ENCODE measurements at regions of chr11 and their contacts with region 1.

Region 1: DNA sequence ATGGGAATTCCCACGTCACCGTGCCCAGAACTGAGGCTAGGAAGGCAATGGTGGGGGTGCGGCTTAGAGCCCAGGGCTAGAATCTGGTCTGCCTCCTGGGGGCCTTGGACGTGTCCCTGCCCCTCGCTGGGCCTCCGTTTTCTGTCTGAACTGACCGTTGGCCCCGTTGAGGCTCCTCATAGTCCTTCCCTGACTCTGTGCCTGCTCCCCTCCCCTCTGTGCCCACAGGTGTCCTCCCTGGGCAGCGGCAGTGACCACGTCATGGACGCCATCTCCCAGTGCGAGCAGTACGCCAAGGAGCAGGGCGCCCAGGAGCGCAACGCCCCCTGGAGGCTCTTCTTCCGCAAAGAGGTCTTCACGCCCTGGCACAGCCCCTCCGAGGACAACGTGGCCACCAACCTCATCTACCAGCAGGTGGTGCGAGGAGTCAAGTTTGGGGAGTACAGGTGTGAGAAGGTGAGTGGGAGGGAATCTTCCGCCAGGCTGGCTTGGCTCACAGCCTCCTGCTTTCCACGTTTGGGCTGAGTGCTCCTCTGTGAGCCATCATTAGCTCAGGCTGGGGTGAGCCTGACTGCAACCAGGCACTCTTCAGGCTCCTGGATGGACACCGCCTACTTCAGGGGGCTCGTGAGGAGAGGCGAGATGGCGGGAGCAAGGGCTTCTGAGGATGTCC is 63.9 kb downstream of the MYO7A start:
- DNase-seq: peak; percentile 81 to 86
- H3K4me3 ChIP-seq: peak overlapping the region in 2 of 3 donors; percentile 45 to 66
- H3K27ac ChIP-seq: peak overlapping the region; percentile 58 to 68
- H3K4me1 ChIP-seq: no peaks in the 10 kb centered on the region
- H3K27me3 ChIP-seq: no peaks in the 10 kb centered on the region
- CTCF ChIP-seq: peak; percentile 34 to 92 (median 83)
- POLR2A ChIP-seq: no peak

Region 2: DNA sequence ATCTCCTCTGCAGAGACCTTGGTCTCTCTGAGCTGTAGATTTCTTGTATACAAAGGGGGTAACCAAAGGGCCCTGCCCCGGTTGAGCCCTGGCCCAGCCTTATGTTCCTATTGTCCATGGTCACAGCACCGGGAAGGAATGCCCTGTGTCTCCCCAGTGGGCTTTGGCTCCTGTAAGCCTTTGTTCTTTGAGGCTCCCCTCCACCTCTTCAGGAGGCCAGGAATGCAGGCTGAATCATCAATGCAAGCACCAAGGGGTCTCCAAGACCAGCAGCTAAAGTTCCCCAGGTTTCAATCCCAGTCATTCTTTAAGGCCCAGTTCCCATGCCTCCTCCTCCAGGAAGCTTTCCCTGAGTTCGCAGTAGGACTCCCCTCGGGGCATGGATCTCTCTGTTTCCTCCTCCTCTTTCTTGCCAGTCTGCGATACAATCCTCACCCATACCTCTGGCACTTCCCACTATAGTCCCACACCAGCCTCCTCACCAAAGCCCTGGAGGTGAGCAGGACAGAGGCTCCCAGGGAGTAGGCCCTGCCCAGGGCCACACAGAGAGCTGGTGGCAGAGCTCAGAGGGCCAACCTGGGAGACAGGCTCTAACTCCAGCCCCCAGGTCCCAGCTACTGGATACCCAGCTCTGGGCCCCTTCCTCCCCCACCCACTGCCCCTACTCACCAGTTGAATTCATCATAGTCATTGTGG is 1729.7 kb before region 1 on chr11:
- intact Hi-C with region 1: loop called (anchors 5 kb)
- DNase-seq: no peak
- H3K4me3 ChIP-seq: no peak overlapping the region
- H3K27ac ChIP-seq: no peak overlapping the region
- H3K4me1 ChIP-seq: no peaks in the 10 kb centered on the region
- H3K27me3 ChIP-seq: no peaks in the 10 kb centered on the region
- CTCF ChIP-seq: no peak
- POLR2A ChIP-seq: no peak

Region 3: DNA sequence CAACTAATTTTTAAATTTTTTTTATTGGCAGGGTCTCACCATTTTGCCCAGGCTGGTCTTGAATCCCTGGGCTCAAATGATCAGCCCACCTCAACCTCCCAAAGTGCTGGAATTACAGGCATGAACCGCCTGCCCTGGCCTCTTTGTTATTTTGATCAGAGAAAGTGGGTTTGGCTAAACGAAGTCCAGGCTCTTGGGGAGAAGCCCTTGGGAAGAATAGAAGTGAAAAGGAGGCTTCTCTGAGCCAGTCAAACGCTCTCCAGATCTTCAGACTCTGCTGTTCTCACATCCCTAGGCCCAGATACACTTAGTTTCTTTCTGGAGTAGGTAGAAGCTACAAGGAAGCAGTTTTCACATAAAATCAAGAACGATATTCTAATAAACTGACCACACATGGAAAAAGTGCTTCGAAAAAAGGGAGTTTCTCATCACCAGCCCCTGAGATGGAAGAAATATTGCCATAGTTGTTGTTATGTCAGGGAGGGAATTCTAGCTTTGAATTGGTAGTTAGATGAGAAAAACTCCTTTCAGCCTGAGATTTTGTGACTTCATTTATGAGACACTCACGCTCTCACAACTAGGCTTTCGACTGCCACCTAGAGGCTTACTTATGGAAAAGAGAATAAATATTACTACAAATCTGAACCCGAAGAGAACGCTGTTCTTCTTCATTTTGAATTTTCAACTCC is 356.0 kb after region 1 on chr11:
- intact Hi-C with region 1: loop called (anchors 10 kb)
- DNase-seq: no peak
- H3K4me3 ChIP-seq: no peak overlapping the region
- H3K27ac ChIP-seq: no peak overlapping the region
- H3K4me1 ChIP-seq: no peaks in the 10 kb centered on the region
- H3K27me3 ChIP-seq: no peaks in the 10 kb centered on the region
- CTCF ChIP-seq: peak; percentile 7 to 72 (median 69)
- POLR2A ChIP-seq: no peak

Measured in breast epithelium (tissue), 4 donors.